Panc1 (cell line): ENCODE measurements at regions of chr18 and their contacts with region 1.

Region 1: GRCh38 chr18:78228974-78229373 is 750.6 kb upstream of the SALL3 start:
- DNase-seq: no peak
- ATAC-seq: no peak
- H3K4me3 ChIP-seq: no peak overlapping the region
- H3K27ac ChIP-seq: no peak overlapping the region
- H3K4me1 ChIP-seq: no peaks in the 10 kb centered on the region
- H3K27me3 ChIP-seq: peaks cover 10% of the 10 kb centered on the region
- CTCF ChIP-seq: no peak

Region 2: DNA sequence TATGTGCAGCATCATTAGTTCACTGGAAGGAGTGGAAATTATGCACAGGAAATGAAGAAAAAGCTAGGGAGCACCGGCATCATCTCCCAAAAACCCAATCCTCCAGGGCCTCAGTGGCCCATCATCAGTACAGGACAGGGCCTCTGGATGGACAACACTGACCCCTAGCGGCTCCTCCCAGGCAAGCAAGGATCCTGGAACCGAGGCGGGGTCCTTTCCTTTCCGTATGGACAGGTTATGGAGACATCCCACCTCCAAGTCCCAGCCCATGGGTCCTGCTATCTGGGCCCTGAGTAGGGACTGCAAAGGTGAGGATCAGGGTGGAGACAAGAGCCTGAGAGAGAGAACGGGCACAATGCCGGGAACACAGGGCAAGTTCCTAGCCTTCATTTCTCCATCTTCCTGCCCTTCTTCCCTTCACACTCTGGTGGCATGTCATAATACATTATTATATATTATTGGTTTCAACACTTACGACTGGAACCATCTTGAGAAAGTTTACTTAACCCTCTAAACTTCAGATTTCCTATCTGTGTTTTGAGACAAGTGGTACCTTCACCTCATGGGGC is 1802.2 kb before region 1 on chr18:
- CTCF ChIA-PET with region 1: no interaction called
- POLR2A ChIA-PET with region 1: no interaction called
- in situ Hi-C with region 1: no loop called
- intact Hi-C with region 1: loop called (anchors 10 kb)
- DNase-seq: no peak
- ATAC-seq: peak; percentile 89
- H3K4me3 ChIP-seq: no peak overlapping the region
- H3K27ac ChIP-seq: no peak overlapping the region
- H3K4me1 ChIP-seq: no peaks in the 10 kb centered on the region
- H3K27me3 ChIP-seq: no peaks in the 10 kb centered on the region
- CTCF ChIP-seq: no peak